ENCODE measurements at regions of chr6 and their contacts with region 1.

Region 1: GRCh38 chr6:75526502-75527127 is 33.0 kb upstream of the FILIP1 start:
- DNase-seq: peak in 5 of 10 donors; percentile 7 to 49 (median 38)

Region 2: GRCh38 chr6:75266716-75267291 is 259.8 kb before region 1 on chr6:
- intact Hi-C with region 1: loop called (anchors 1 kb)
- DNase-seq: no peak

Region 3: GRCh38 chr6:75296811-75297779 is 229.5 kb before region 1 on chr6:
- intact Hi-C with region 1: loop called (anchors 1 kb)
- DNase-seq: no peak